ENCODE measurements at regions of chr2 and their contacts with region 1.

Region 1: GRCh38 chr2:39227628-39228412 is 15.9 kb downstream of the CDKL4 start:
- DNase-seq: peak; percentile 51 to 69
- H3K4me3 ChIP-seq: no peak overlapping the region
- H3K27ac ChIP-seq: no peak overlapping the region
- H3K4me1 ChIP-seq: no peaks in the 10 kb centered on the region
- H3K27me3 ChIP-seq: no peaks in the 10 kb centered on the region
- CTCF ChIP-seq: peak; percentile 92

Region 2: GRCh38 chr2:38581193-38582147 is 646.4 kb before region 1 on chr2:
- CTCF ChIA-PET with region 1: no interaction called
- POLR2A ChIA-PET with region 1: no interaction called
- intact Hi-C with region 1: loop called (anchors 5 kb)
- DNase-seq: peak in 1 of 2 experiments; percentile 56
- H3K4me3 ChIP-seq: no peak overlapping the region
- H3K27ac ChIP-seq: no peak overlapping the region
- H3K4me1 ChIP-seq: no peaks in the 10 kb centered on the region
- H3K27me3 ChIP-seq: no peaks in the 10 kb centered on the region
- CTCF ChIP-seq: peak; percentile 90

Region 3: DNA sequence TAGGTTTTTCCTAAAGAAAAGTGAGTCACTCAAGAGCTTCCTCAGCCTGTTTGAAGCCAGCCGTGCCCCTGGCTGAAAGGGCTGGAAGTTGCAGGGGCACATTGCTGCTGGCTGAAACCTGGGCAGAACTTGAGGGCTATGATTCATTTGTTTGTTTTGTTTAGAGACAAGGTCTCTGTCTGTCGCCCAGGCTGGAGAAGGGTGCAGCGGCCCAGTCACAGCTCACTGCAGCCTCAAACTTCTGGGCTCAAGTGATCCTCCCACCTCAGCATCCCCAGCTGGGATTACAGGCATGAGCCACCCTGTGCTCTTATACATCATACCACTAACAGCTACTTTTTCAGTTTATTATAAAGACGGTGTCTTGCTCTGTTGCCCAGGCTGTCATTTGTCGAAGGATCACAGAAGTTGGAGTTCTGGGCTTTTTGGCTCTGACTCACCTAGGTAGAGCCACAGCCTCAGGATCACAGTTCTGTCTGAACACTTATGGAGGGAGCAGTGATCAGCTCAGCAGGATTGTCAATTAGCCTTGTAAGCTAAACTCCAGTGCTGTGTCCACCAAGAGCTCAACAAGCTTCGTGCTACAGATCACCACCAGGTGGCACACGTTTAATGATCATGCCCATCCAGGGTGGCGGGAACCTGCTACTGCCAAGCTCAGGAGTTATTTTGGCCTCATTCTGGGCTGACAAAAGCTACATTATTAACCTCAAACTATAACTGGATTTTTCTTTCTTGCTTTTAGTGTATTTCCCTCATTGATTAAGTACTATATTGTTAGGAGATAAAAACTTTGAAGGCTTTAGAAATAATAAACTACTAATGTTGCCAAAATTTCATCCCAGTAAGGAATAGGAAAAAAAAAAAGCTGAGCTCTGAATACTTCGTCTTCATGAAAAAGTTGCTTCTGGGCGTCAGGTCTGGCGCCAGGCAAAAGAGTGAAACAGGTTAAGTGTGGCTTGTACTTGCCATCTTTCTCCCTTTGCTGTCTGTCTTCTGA is 280.3 kb before region 1 on chr2:
- CTCF ChIA-PET with region 1: interaction called, 11 read pairs
- POLR2A ChIA-PET with region 1: no interaction called
- intact Hi-C with region 1: loop called (anchors 1 kb)
- DNase-seq: peak; percentile 82 to 97
- H3K4me3 ChIP-seq: peak overlapping the region; percentile 21; the same call in 1 of the 2 replicates
- H3K27ac ChIP-seq: peak overlapping the region; percentile 63
- H3K4me1 ChIP-seq: peaks cover 21% of the 10 kb centered on the region
- H3K27me3 ChIP-seq: no peaks in the 10 kb centered on the region
- CTCF ChIP-seq: peak; percentile 88

Region 4: DNA sequence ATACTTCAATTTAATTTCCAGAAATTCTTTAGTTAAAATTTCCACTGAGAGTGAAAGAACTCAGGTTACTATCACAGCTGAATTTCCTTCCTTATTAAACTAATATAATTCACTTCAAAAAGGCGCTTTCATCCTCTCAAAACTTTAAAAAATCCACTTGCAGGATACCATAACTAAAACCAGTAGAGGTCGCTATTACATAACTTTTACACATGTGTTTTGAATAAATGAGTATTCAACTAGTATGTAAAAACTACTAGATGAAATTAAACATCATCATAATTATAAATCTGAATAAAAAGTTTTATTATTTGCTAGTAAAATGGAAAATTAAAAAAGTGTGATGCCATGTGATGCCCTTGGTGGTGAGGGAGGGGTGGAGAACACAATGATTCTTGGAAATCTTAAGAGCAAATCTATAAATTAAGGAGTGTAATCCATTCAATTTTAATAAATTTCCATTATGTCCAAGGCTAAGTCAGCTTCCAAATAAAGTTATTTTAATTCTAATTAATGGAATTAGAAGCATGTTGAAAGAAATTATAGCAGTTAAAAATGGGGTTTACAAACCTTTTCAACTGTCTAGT is 168.4 kb before region 1 on chr2:
- CTCF ChIA-PET with region 1: interaction called, 3 read pairs
- POLR2A ChIA-PET with region 1: no interaction called
- intact Hi-C with region 1: loop called (anchors 1 kb)
- DNase-seq: peak in 1 of 2 experiments; percentile 54
- H3K4me3 ChIP-seq: no peak overlapping the region
- H3K27ac ChIP-seq: no peak overlapping the region
- H3K4me1 ChIP-seq: no peaks in the 10 kb centered on the region
- H3K27me3 ChIP-seq: no peaks in the 10 kb centered on the region
- CTCF ChIP-seq: peak; percentile 87

Region 5: DNA sequence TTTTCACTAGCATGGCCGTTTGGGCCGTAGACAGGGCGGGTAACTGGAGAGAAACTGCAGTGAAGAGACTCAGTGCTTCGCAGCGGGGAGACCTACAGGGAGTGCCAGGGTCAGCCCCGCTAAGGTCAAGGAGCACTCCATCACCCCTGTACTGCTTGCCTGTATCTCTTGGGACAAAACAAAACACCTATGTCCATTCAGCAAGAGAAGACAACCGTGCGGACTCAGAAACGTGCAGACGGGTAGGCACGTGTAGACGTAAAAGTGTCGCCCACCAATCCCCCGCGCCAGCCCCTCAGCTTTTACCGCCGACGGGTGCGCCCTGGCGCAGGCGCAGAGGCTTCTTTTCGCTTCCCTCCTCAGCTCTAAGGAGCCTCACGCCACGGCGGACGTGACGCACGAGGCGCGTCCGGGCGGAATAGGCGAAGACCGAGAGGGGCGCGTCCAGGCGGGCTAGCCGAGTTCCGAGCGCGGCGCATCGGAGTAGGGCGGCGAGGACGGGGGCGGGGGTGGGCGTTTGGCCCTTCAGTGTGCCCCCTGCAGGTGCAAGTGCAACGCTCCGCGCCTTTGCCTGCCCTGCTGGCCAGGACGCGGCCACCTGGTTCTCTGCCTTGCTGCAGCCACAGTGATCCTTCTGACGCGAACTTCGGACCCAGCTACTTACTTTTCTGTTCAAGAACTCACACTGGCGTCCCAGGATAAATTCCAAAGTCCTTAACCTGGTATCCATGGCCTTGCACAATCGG is 103.6 kb before region 1 on chr2:
- CTCF ChIA-PET with region 1: interaction called, 9 read pairs
- POLR2A ChIA-PET with region 1: interaction called, 5 read pairs
- intact Hi-C with region 1: loop called (anchors 1 kb)
- DNase-seq: peak; percentile 90 to 94
- H3K4me3 ChIP-seq: peak overlapping the region; percentile 83
- H3K27ac ChIP-seq: peak overlapping the region; percentile 52
- H3K4me1 ChIP-seq: peaks cover 29% of the 10 kb centered on the region
- H3K27me3 ChIP-seq: no peaks in the 10 kb centered on the region
- CTCF ChIP-seq: peak; percentile 63

Region 6: GRCh38 chr2:39194686-39195085 is 33.1 kb before region 1 on chr2:
- CTCF ChIA-PET with region 1: no interaction called
- POLR2A ChIA-PET with region 1: no interaction called
- intact Hi-C with region 1: no loop called
- DNase-seq: no peak
- H3K4me3 ChIP-seq: no peak overlapping the region
- H3K27ac ChIP-seq: no peak overlapping the region
- H3K4me1 ChIP-seq: no peaks in the 10 kb centered on the region
- H3K27me3 ChIP-seq: no peaks in the 10 kb centered on the region
- CTCF ChIP-seq: no peak

Region 7: GRCh38 chr2:39266139-39266805 is 38.5 kb after region 1 on chr2:
- CTCF ChIA-PET with region 1: no interaction called
- POLR2A ChIA-PET with region 1: no interaction called
- intact Hi-C with region 1: loop called (anchors 1 kb)
- DNase-seq: no peak
- H3K4me3 ChIP-seq: no peak overlapping the region
- H3K27ac ChIP-seq: no peak overlapping the region
- H3K4me1 ChIP-seq: no peaks in the 10 kb centered on the region
- H3K27me3 ChIP-seq: no peaks in the 10 kb centered on the region
- CTCF ChIP-seq: no peak

Region 8: DNA sequence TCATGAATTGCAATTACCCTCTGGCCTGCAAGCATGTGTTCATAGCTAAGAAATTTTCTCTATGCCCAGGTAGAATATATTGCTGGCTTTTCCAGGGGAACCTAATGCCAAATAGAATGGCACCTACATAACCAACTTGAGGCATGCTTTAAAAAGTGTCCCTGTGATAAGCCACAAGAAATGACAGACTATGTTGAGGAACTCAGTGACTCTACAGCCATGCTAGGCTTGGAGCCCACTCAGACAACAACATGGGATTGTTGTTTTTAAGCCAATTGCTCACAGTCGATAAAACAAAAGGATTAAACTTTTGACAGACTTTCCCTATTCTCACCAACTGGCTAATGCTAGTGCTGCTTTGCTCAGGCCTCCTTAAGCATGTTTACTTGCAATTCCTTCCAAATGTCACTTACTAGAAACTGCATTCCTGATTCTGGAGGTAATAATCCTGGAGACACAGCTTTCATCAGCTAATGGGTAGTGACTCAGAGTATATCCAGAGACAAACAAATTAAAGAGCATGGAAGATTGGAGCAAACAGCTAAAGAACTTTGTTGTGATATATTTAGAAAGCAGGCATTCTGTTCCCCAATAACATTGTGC is 975.1 kb after region 1 on chr2:
- CTCF ChIA-PET with region 1: no interaction called
- POLR2A ChIA-PET with region 1: no interaction called
- intact Hi-C with region 1: no loop called
- DNase-seq: no peak
- H3K4me3 ChIP-seq: no peak overlapping the region
- H3K27ac ChIP-seq: no peak overlapping the region
- H3K4me1 ChIP-seq: no peaks in the 10 kb centered on the region
- H3K27me3 ChIP-seq: no peaks in the 10 kb centered on the region
- CTCF ChIP-seq: no peak

Measured in PC-9 (cell line).